ENCODE measurements at regions of chr1 and their contacts with region 1.

Region 1: DNA sequence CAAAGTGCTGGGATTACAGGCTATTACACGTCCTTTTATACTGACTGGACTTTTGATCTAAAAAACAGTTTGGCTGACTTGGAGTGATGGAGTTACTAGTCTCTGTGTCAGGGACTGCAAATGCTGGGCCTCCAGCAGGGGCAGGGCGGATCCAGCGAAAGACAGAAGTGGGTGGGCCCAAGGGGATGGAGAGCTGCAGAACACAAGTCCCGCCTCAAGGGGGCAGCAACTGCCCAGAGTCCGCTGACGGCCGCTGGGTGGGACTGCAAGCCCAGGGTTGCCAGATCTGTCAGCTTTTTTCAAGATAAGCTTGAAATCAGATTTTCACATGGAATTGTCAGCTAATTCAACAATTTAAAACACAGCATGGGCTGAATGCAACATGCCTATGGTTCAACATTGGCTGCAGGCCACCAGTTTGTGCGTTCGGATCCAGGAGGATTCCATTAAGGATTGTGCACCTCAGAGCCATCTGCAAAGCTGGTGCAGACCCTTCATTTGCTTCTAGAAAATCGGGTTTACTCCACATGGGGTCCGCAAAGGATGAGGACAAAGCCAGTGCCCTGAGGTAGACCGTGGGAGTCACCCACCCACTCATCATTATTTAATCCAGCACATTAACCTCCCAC is 10.7 kb downstream of the STMN1 start:
- DNase-seq: peak; percentile 94
- ATAC-seq: peak; percentile 81
- H3K4me3 Mint-ChIP-seq: no peak overlapping the region
- H3K27ac Mint-ChIP-seq: peak overlapping the region; percentile 54
- H3K4me1 Mint-ChIP-seq: peaks cover 19% of the 10 kb centered on the region
- H3K27me3 Mint-ChIP-seq: no peaks in the 10 kb centered on the region
- CTCF ChIP-seq: peak; percentile 94

Region 2: GRCh38 chr1:25837262-25837875 is 58.1 kb before region 1 on chr1:
- CTCF ChIA-PET with region 1: interaction called, 14 read pairs
- POLR2A ChIA-PET with region 1: no interaction called
- DNase-seq: no peak
- ATAC-seq: 0 out of 2 replicates have a peak, but pooled peaks have one; percentile 51
- H3K4me3 Mint-ChIP-seq: no peak overlapping the region
- H3K27ac Mint-ChIP-seq: peak overlapping the region; percentile 2; the same call in 1 of the 2 replicates
- H3K4me1 Mint-ChIP-seq: no peaks in the 10 kb centered on the region
- H3K27me3 Mint-ChIP-seq: no peaks in the 10 kb centered on the region
- CTCF ChIP-seq: no peak

Region 3: GRCh38 chr1:25922056-25922969 is 26.8 kb after region 1 on chr1:
- CTCF ChIA-PET with region 1: interaction called, 29 read pairs
- POLR2A ChIA-PET with region 1: no interaction called
- DNase-seq: peak; percentile 55
- ATAC-seq: peak; percentile 77
- H3K4me3 Mint-ChIP-seq: peak overlapping the region; percentile 82
- H3K27ac Mint-ChIP-seq: peak overlapping the region; percentile 64
- H3K4me1 Mint-ChIP-seq: peaks cover 35% of the 10 kb centered on the region
- H3K27me3 Mint-ChIP-seq: peaks cover 16% of the 10 kb centered on the region
- CTCF ChIP-seq: no peak

Region 4: GRCh38 chr1:25954282-25954938 is 58.9 kb after region 1 on chr1:
- CTCF ChIA-PET with region 1: interaction called, 22 read pairs
- POLR2A ChIA-PET with region 1: no interaction called
- DNase-seq: no peak
- ATAC-seq: no peak
- H3K4me3 Mint-ChIP-seq: no peak overlapping the region
- H3K27ac Mint-ChIP-seq: no peak overlapping the region
- H3K4me1 Mint-ChIP-seq: peaks cover 10% of the 10 kb centered on the region
- H3K27me3 Mint-ChIP-seq: peaks cover 4% of the 10 kb centered on the region
- CTCF ChIP-seq: no peak

Region 5: GRCh38 chr1:25997828-25998761 is 102.6 kb after region 1 on chr1 and contains the start of gene PAFAH2:
- CTCF ChIA-PET with region 1: interaction called, 112 read pairs
- POLR2A ChIA-PET with region 1: interaction called, 5 read pairs
- DNase-seq: peak; percentile 97
- ATAC-seq: peak; percentile 99
- H3K4me3 Mint-ChIP-seq: peak within 1 kb of the TSS; percentile 90
- H3K27ac Mint-ChIP-seq: peak within 1 kb of the TSS; percentile 67
- H3K4me1 Mint-ChIP-seq: peaks cover 25% of the 10 kb centered on the region
- H3K27me3 Mint-ChIP-seq: no peaks in the 10 kb centered on the region
- CTCF ChIP-seq: peak; percentile 83
- total RNA-seq, gene PAFAH2: 9.4 to 11.8 TPM (median 11.5 TPM) in 3 replicates

Region 6: DNA sequence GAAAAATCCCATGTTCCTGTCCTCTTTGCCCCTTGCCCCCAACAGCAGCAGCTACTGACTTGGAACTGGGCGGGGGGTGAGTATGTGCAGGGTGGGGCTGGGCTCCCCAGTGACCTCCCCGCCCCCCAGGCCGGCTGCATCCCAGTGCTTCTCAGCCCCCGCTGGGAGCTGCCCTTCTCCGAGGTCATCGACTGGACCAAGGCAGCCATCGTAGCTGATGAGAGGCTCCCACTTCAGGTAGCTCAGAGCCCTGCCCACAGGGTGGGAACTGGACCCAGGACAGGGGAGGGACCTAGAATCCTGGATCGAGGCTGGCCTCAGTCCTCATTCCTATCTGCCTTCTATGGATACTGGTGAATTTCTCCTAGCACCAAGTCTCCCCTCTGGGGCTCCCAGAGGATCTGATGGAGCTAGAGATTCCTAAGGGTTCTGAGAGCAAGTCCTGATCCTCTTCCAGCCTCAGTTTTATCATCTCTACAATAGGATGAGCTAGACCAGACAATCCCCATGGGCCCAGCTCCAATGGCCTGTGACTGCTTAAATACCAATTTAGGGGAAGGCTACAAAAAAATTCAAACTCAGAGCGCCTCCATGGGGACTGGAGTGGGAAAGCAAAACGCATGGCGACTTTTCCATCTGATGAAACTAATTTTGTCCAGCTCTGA is 134.1 kb after region 1 on chr1:
- CTCF ChIA-PET with region 1: interaction called, 33 read pairs
- POLR2A ChIA-PET with region 1: no interaction called
- DNase-seq: no peak
- ATAC-seq: peak; percentile 34
- H3K4me3 Mint-ChIP-seq: no peak overlapping the region
- H3K27ac Mint-ChIP-seq: no peak overlapping the region
- H3K4me1 Mint-ChIP-seq: peaks cover 6% of the 10 kb centered on the region; the same call in 1 of the 2 replicates
- H3K27me3 Mint-ChIP-seq: peaks cover 31% of the 10 kb centered on the region
- CTCF ChIP-seq: no peak